ENCODE measurements at regions of chr6 and their contacts with region 1.

Region 1: GRCh38 chr6:43714311-43715055 is 26.9 kb upstream of the MRPS18A start:
- DNase-seq: peak; percentile 73 to 85 (median 80)
- ATAC-seq: peak; percentile 73
- H3K4me3 ChIP-seq: no peak overlapping the region
- H3K27ac ChIP-seq: no peak overlapping the region; the same call in 2 of the 3 replicates
- H3K4me1 ChIP-seq: peaks cover 28 to 29% of the 10 kb centered on the region in 2 experiments
- H3K27me3 ChIP-seq: no peaks in the 10 kb centered on the region
- CTCF ChIP-seq: no peak; a peak in 1 of 6 replicates
- EP300 ChIP-seq: peak; percentile 76
- POLR2A ChIP-seq: no peak
- RAD21 ChIP-seq: no peak

Region 2: DNA sequence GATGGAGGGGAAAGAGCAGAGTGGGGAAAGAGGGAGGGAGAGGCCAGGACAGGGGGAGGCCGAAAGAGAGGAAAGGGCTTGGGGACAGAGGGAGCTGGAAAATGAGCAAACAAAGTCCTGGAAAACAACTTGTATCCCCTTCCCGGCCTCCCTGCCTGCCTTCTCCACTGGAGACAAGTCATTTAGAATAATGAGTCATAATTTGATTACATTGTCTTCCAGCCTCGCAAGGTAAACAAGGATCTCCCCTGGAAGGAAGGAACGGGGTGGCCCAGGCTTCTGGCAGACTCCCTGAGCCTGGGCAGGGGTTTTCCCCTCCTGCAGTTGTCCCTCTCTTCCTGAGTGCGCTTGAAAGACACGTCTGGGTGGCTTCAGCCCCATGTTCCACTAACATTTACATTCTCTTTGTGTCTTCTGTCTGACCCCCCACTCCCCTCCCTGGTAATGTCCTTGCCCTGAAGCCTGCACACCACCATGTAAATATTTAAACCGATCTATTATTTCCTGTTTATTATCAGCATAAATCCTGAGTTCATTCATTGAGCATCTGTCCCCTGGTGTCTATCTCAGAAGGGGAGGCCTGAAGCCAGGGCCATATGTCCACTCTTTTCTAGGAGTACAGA is 14.8 kb before region 1 on chr6:
- CTCF ChIA-PET with region 1: no interaction called
- POLR2A ChIA-PET with region 1: interaction called, 10 read pairs
- in situ Hi-C with region 1: no loop called
- intact Hi-C with region 1: no loop called
- DNase-seq: no peak
- ATAC-seq: no peak
- H3K4me3 ChIP-seq: no peak overlapping the region
- H3K27ac ChIP-seq: no peak overlapping the region
- H3K4me1 ChIP-seq: peaks cover 13 to 39% of the 10 kb centered on the region in 2 experiments
- H3K27me3 ChIP-seq: no peaks in the 10 kb centered on the region
- CTCF ChIP-seq: no peak
- EP300 ChIP-seq: no peak
- POLR2A ChIP-seq: no peak
- RAD21 ChIP-seq: no peak